Body of pancreas (tissue), 4 donors: ENCODE measurements at regions of chr5 and their contacts with region 1.

Region 1: DNA sequence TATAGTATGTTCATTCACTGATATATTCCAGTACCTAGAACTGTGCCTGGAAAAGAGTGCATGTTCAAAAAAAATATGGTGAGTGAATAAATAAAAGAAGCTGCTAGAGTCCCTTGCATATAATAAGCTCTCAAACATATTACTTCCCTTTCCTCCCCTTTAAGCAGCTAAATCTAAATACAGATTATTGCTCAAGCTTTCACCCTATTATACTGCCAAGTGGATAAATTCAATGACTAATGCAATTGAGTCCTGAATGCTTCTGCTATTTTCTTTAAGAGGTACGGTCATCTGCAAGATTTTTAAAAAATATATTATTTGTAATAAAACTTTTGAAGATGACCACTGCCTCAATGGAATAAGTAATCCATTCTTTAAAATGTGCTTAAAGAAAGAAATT is 248.4 kb downstream of the PLK2 start:
- DNase-seq: no peak
- ATAC-seq: no peak
- H3K4me3 ChIP-seq: no peak overlapping the region
- H3K27ac ChIP-seq: no peak overlapping the region
- H3K4me1 ChIP-seq: peaks cover 6% of the 10 kb centered on the region
- H3K27me3 ChIP-seq: no peaks in the 10 kb centered on the region
- CTCF ChIP-seq: no peak
- POLR2A ChIP-seq: no peak

Region 2: DNA sequence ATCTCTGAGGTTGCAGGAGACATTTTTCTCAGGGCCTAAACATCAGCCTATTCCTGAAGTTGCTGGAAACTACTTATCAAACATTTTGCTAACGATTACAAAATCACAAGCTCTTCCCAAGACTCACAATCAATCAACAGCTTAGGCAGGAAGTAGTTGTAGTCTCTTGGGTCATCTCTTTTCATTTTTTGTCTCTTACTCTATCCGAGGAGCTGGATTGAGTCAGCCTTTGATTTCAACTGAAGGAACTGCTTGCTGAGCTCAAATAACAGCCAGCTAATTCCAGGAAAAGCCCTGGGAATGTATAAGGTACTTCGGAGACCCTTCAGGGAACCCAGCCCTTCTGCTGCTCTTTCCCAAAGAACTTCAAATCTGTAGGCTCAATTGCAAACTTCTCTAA is 150.4 kb before region 1 on chr5:
- intact Hi-C with region 1: loop called (anchors 10 kb)
- DNase-seq: no peak
- ATAC-seq: no peak
- H3K4me3 ChIP-seq: no peak overlapping the region
- H3K27ac ChIP-seq: no peak overlapping the region
- H3K4me1 ChIP-seq: no peaks in the 10 kb centered on the region
- H3K27me3 ChIP-seq: no peaks in the 10 kb centered on the region
- CTCF ChIP-seq: no peak
- POLR2A ChIP-seq: no peak